PC-9 (cell line): ENCODE measurements at regions of chr19 and their contacts with region 1.

Region 1: DNA sequence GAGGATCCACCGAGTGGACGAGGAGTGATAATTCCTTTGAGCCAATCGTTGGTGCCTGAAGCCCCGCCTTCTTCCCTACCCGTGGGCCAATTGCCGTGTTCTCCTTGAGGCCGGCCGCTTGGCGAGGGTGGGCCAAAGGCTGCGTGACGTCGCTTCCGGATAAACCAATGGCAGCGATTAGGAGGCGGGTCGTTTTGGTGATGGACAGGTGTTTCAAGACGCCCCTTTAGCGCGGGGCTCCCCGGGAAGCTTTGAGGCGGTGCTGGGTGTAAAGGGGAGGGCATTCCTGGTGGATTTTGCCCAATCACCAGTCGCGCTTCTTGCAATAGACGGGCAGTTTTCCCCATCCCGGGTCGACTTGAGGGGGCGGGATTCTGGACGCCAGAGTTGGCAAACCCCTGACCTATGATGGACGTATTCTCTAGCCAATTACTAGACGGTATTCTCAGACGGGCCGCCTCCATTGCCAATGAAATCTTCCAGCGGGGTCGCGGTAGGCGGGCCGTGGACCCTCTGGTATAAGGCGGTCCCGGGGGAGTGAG is 310 bp upstream of the PRMT1 start:
- DNase-seq: peak; percentile 99
- H3K4me3 ChIP-seq: peak overlapping the region; percentile 99
- H3K27ac ChIP-seq: peak overlapping the region; percentile 91
- H3K4me1 ChIP-seq: peaks cover 21% of the 10 kb centered on the region
- H3K27me3 ChIP-seq: no peaks in the 10 kb centered on the region
- CTCF ChIP-seq: no peak

Region 2: GRCh38 chr19:49502866-49503581 is 173.7 kb before region 1 on chr19:
- CTCF ChIA-PET with region 1: interaction called, 10 read pairs
- POLR2A ChIA-PET with region 1: no interaction called
- intact Hi-C with region 1: loop called (anchors 1 kb)
- DNase-seq: peak in 1 of 2 experiments; percentile 46
- H3K4me3 ChIP-seq: no peak overlapping the region
- H3K27ac ChIP-seq: no peak overlapping the region
- H3K4me1 ChIP-seq: peaks cover 6% of the 10 kb centered on the region
- H3K27me3 ChIP-seq: no peaks in the 10 kb centered on the region
- CTCF ChIP-seq: peak; percentile 79

Region 3: GRCh38 chr19:49590071-49590970 is 86.4 kb before region 1 on chr19:
- CTCF ChIA-PET with region 1: no interaction called
- POLR2A ChIA-PET with region 1: interaction called, 18 read pairs
- intact Hi-C with region 1: loop called (anchors 1 kb)
- DNase-seq: peak; percentile 96 to 99
- H3K4me3 ChIP-seq: peak overlapping the region; percentile 89
- H3K27ac ChIP-seq: peak overlapping the region; percentile 71
- H3K4me1 ChIP-seq: peaks cover 9% of the 10 kb centered on the region; the same call in 1 of the 2 replicates
- H3K27me3 ChIP-seq: no peaks in the 10 kb centered on the region
- CTCF ChIP-seq: no peak; the same call in 1 of the 2 replicates

Region 4: GRCh38 chr19:49746206-49747091 is 69.7 kb after region 1 on chr19:
- CTCF ChIA-PET with region 1: interaction called, 17 read pairs
- POLR2A ChIA-PET with region 1: no interaction called
- intact Hi-C with region 1: no loop called
- DNase-seq: no peak
- H3K4me3 ChIP-seq: no peak overlapping the region
- H3K27ac ChIP-seq: no peak overlapping the region
- H3K4me1 ChIP-seq: no peaks in the 10 kb centered on the region
- H3K27me3 ChIP-seq: no peaks in the 10 kb centered on the region
- CTCF ChIP-seq: no peak

Region 5: DNA sequence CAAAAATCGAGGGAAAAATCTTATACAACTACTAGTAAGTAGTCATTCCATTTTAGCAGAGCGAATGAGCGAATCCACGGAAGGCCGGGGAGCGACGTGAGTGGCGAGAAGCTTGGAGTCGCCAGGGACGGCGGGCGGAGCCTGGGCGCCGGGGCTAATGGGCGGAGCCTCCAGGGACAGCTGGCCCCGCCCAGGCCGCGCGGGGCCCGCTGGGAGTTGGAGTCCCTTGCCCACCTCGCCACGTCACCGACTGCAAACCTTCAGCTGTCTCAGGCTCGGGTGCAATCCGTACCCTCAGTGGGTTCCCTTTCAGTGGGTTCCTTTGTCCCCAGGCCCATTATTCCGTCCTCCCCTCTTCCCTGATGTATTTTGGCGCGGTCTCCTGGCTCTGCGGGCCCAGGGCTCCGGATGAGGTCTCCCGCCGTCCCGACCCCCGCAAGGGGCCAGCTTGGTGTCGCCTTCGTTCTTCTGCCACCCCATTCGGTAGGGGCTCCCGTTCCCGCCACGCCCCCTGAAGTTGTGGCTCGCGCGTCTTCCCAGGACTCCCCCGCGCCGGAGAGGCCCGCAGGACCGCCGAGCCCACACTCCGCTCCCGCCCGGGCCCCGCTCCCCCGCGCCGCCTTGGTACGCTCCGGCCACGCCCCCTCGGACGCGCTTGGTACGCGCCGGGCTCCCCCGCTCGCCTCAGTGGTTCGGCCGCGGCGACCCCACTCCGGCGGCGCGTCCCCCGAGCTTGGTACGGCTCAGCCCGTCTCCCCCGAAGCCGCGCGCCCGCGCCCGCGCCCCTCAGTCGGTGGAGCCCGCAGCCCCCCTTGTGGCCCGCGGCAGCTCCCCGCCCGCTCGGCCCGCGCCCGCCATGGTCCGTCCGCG is 173.9 kb after region 1 on chr19 and contains the start of gene PTOV1:
- CTCF ChIA-PET with region 1: no interaction called
- POLR2A ChIA-PET with region 1: no interaction called
- intact Hi-C with region 1: loop called (anchors 1 kb)
- DNase-seq: peak; percentile 76 to 92
- H3K4me3 ChIP-seq: peak within 1 kb of the TSS; percentile 99
- H3K27ac ChIP-seq: peak within 1 kb of the TSS; percentile 90
- H3K4me1 ChIP-seq: peaks cover 37% of the 10 kb centered on the region
- H3K27me3 ChIP-seq: no peaks in the 10 kb centered on the region
- CTCF ChIP-seq: no peak
- total RNA-seq, gene PTOV1: 151 and 155 TPM in 2 replicates

Region 6: GRCh38 chr19:49869441-49870176 is 192.8 kb after region 1 on chr19:
- CTCF ChIA-PET with region 1: interaction called, 10 read pairs
- POLR2A ChIA-PET with region 1: interaction called, 3 read pairs
- intact Hi-C with region 1: loop called (anchors 1 kb)
- DNase-seq: peak; percentile 98 to 99
- H3K4me3 ChIP-seq: peak overlapping the region; percentile 48; the same call in 1 of the 2 replicates
- H3K27ac ChIP-seq: no peak overlapping the region
- H3K4me1 ChIP-seq: peaks cover 36% of the 10 kb centered on the region
- H3K27me3 ChIP-seq: no peaks in the 10 kb centered on the region
- CTCF ChIP-seq: no peak